Heart right ventricle (tissue), 16 donors: ENCODE measurements at regions of chr18 and their contacts with region 1.

Region 1: GRCh38 chr18:25164848-25165811 is 186.8 kb downstream of the ZNF521 start:
- DNase-seq: no peak
- ATAC-seq: peak; percentile 52 to 84 (median 79)
- H3K4me3 ChIP-seq: peak overlapping the region in 9 of 10 donors; percentile 19 to 55 (median 48)
- H3K27ac ChIP-seq: peak overlapping the region in 7 of 10 donors; percentile 28 to 58 (median 42)
- H3K4me1 ChIP-seq: peaks cover 5 to 28% (median 19%) of the 10 kb centered on the region in 9 donors
- H3K27me3 ChIP-seq: no peaks in the 10 kb centered on the region
- CTCF ChIP-seq: peak in 1 of 9 donors; percentile 19

Region 2: DNA sequence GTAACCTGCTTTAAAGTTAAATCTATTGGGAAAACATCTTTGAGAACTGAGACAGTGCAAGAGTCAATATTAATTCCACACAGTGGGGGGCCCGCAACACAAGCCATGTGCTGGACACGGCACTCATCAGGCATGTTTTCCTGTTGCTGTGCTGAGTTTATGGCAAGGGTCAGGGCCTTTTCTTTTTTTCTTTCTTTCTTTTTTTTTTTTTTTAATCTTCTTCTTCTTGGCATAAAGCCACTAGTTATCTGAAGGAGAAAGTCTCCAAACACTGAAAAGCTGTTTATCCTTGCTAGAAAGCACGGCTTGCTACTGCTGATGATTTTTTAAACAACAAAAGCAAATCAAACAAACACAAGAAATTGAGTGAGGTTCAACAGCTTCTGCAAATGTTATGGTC is 65.2 kb before region 1 on chr18:
- intact Hi-C with region 1: loop called in 2 of 10 experiments (anchors 5 to 10 kb)
- DNase-seq: no peak
- ATAC-seq: no peak
- H3K4me3 ChIP-seq: no peak overlapping the region
- H3K27ac ChIP-seq: no peak overlapping the region
- H3K4me1 ChIP-seq: peaks cover 2 to 44% (median 15%) of the 10 kb centered on the region in 9 donors
- H3K27me3 ChIP-seq: no peaks in the 10 kb centered on the region
- CTCF ChIP-seq: no peak

Region 3: DNA sequence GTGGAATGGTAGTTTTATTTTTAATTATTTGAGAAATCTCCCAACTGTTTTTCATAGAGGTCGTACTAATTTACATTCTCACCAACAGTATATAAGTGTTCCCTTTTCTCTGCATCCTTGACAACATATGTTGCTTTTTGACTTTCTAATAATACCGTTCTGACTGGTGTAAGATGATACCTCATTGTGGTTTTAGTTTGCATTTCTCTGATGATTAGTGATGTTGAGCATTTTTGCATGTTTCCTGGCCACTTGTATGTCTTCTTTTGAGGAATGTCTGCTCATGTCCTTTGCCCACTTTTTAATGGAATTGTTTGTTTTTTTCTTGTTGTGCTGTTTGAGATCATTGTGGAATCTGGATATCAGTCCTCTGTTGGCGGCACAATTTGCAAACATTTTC is 55.6 kb before region 1 on chr18:
- intact Hi-C with region 1: loop called in 1 of 10 experiments (anchors 5 kb)
- DNase-seq: no peak
- ATAC-seq: no peak
- H3K4me3 ChIP-seq: no peak overlapping the region
- H3K27ac ChIP-seq: no peak overlapping the region
- H3K4me1 ChIP-seq: peaks cover 0 to 6% (median 0%) of the 10 kb centered on the region in 9 donors
- H3K27me3 ChIP-seq: no peaks in the 10 kb centered on the region
- CTCF ChIP-seq: no peak